B cell (primary cell): ENCODE measurements at regions of chr2 and their contacts with region 1.

Region 1: GRCh38 chr2:160282063-160282580 is 82.0 kb upstream of the ITGB6 start:
- DNase-seq: no peak
- ATAC-seq: no peak
- H3K4me3 ChIP-seq: no peak overlapping the region
- H3K4me3 Mint-ChIP-seq: no peak overlapping the region
- H3K27ac ChIP-seq: no peak overlapping the region
- H3K27ac Mint-ChIP-seq: no peak overlapping the region
- H3K4me1 ChIP-seq: no peaks in the 10 kb centered on the region
- H3K4me1 Mint-ChIP-seq: no peaks in the 10 kb centered on the region
- H3K27me3 ChIP-seq: no peaks in the 10 kb centered on the region
- H3K27me3 Mint-ChIP-seq: no peaks in the 10 kb centered on the region
- CTCF ChIP-seq: no peak

Region 2: DNA sequence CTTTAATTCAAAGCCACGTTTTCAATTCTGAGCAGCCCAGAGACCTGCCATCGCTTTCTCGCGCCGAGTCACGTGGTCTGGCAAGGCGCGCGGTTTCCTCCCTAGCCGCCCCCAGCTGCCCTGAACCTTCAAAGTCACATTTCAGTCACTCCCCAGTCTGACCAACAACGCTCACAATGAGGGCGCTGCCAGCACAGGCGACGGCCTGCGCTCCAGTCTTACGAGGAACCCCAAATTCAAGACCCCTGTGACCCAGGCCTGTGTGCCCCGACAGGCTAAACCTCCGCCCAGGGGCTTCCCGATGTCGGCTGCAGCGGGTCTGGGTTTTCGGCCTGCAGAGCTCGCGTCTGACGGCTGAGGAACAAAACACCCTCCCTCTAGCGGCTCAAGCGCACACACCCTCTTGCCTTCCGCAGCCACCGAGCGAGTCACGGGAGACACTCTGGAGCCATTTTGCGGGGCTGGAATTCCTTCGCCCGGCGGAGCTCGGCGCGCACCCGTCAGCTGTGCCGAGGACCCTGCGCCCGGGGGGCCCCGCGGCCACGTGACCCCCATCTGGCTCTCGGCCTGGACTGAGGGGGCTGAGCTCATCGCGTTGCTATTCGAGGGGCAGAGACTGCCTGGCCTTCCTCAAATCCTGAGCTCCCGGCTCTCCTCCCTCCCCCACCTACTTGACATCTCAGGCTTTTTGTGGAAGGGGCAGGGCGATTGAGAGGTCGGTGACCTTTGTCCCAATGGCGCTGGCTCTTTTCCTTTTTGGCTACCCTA is 12.1 kb before region 1 on chr2:
- CTCF ChIA-PET with region 1: interaction called, 12 read pairs
- POLR2A ChIA-PET with region 1: no interaction called
- intact Hi-C with region 1: no loop called
- DNase-seq: peak; percentile 85
- ATAC-seq: peak; percentile 95
- H3K4me3 ChIP-seq: peak overlapping the region in 4 of 5 experiments; percentile 44 to 75 (median 58)
- H3K4me3 Mint-ChIP-seq: peak overlapping the region; percentile 93
- H3K27ac ChIP-seq: peak overlapping the region in 1 of 2 donors; percentile 64
- H3K27ac Mint-ChIP-seq: peak overlapping the region; percentile 78
- H3K4me1 ChIP-seq: peaks cover 6 to 15% of the 10 kb centered on the region in 2 donors
- H3K4me1 Mint-ChIP-seq: peaks cover 13% of the 10 kb centered on the region
- H3K27me3 ChIP-seq: no peaks in the 10 kb centered on the region
- H3K27me3 Mint-ChIP-seq: peaks cover 6% of the 10 kb centered on the region
- CTCF ChIP-seq: peak; percentile 71